Ascending aorta (tissue), 2 donors: ENCODE measurements at regions of chr1 and their contacts with region 1.

Region 1: DNA sequence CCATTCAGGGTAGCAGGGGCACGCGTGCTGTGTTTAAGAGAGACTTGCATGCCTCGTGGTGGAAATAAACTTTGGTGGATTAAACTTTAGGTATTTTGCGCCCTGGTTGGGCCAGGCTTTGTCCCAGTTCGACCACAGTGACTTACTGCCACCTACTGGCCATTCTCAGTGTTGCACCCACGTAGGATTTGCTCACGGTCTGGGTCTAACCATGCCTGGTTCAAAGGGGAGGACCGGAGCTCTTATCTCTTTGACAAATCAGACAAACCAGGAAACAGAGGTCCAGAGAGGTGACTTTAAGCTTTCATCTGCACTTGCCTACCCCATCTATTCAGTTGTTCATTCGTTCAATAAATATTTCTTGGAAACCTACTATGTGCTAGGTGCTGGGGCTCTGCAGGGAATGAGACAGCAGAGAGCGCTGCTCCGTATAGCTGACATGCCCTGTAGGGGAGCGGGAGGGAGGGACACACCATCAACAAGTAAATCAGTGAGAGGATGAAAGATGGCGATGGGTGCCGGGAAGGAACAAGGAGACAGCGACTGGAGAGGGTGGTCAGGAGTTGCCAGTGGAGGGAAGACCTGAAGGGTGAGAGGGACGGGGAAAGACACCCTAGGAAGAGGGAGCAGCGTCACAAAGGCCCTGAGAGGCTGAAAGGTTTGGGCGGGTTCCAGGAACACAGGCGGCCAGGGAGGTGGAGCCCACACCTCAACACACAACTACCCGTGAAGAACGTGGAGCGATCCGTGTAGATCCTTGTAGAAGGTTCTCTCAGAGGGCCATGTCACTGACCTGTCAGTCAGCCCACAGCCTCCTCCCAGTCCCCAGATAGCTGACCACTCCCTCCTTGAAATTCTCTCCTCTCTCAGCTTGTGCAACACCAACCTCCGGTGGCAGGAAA is 27.2 kb upstream of the TINAGL1 start:
- DNase-seq: peak in 1 of 2 donors; percentile 94
- H3K4me3 ChIP-seq: peak overlapping the region; percentile 29 to 36
- H3K27ac ChIP-seq: no peak overlapping the region
- H3K4me1 ChIP-seq: peaks cover 2 to 11% of the 10 kb centered on the region in 2 donors
- H3K27me3 ChIP-seq: no peaks in the 10 kb centered on the region
- CTCF ChIP-seq: peak; percentile 90 to 91 (median 91)

Region 2: DNA sequence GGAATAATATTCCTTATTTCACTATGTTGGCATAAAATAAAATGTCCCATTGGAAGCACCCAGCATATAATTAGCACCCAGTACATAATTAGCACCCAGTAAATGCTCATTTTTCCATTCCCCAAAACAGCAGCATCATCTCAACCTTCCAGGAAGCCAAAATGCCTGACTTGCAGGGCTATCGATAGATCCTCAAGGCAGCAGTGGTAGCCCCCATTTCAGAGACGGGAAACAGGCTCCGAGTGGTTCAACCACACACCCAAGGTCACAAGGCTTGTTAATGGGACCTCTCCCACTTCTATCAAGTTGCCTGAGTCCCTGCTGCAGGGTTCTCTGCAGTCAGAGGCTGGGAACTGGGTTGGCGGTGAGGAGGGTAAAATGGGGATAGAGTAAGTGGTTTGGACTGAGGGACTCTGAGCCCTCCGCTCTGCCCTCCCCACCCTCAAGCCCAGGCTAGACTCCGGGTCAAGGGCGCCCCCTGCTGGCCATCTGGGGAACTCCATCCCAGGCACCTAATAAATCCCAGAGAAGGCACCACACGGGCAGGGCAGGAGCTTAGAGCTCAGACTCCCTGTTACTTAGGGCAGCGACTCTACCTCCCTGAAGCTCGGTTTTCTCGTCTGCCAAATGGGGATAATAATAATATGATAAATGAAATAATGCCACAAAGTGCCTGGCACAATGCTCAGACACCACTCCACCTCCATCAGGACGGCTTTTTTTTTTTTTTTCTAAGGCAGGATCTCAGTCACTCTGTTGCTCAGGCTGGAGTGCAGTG is 769.7 kb before region 1 on chr1:
- intact Hi-C with region 1: loop called (anchors 10 kb)
- DNase-seq: peak; percentile 72 to 93
- H3K4me3 ChIP-seq: no peak overlapping the region
- H3K27ac ChIP-seq: no peak overlapping the region
- H3K4me1 ChIP-seq: peaks cover 0 to 2% of the 10 kb centered on the region in 2 donors
- H3K27me3 ChIP-seq: no peaks in the 10 kb centered on the region
- CTCF ChIP-seq: peak; percentile 94 to 98 (median 94)

Region 3: GRCh38 chr1:31182352-31182751 is 366.8 kb before region 1 on chr1:
- intact Hi-C with region 1: loop called (anchors 5 kb)
- DNase-seq: peak; percentile 35 to 87
- H3K4me3 ChIP-seq: peak overlapping the region in 1 of 2 donors; percentile 16
- H3K27ac ChIP-seq: no peak overlapping the region
- H3K4me1 ChIP-seq: peaks cover 4% of the 10 kb centered on the region in 2 donors
- H3K27me3 ChIP-seq: no peaks in the 10 kb centered on the region
- CTCF ChIP-seq: peak; percentile 10 to 34 (median 10)

Region 4: GRCh38 chr1:31394628-31395193 is 154.4 kb before region 1 on chr1:
- intact Hi-C with region 1: loop called (anchors 2 kb)
- DNase-seq: peak; percentile 61 to 88
- H3K4me3 ChIP-seq: peak overlapping the region; percentile 40 to 62
- H3K27ac ChIP-seq: no peak overlapping the region
- H3K4me1 ChIP-seq: peaks cover 0 to 3% of the 10 kb centered on the region in 2 donors
- H3K27me3 ChIP-seq: no peaks in the 10 kb centered on the region
- CTCF ChIP-seq: peak; percentile 88 to 91 (median 90)

Region 5: DNA sequence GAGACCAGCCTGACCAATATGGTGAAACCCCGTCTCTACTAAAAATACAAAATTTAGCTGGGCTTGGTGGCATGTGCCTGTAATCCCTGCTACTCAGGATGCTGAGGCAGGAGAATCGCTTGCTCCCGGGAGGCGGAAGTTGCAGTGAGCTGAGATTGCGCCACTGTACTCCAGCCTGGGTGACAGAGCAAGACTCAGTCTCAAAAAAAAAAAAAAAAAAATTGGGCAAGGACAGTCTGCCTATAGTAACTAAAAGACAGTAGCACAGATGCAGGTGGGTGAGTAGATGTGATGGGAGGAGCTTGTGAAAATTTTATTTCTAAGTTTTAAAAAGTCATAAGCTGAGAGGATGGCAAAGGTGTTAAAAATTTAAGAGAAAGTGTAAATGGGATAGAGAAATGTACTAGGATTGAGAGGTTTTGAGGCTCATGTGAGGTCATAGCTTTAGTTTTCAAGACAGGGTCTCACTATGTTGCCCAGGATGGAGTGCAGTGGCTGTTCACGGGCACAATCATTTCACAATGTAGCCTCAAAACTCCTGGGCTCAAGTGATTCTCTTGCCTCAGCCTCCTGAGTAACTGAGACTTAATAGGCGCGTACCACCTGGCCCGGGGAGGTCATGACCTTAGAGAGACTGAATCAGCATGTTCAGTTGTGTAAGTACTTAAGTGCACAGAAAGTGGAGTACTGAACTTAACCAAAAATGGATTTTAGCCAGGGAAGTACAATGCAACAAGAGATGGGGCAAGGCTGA is 355.4 kb after region 1 on chr1:
- intact Hi-C with region 1: no loop called
- DNase-seq: peak in 1 of 2 donors; percentile 25
- H3K4me3 ChIP-seq: no peak overlapping the region
- H3K27ac ChIP-seq: no peak overlapping the region
- H3K4me1 ChIP-seq: no peaks in the 10 kb centered on the region
- H3K27me3 ChIP-seq: no peaks in the 10 kb centered on the region
- CTCF ChIP-seq: no peak